ENCODE measurements at regions of chr7 and their contacts with region 1.

Region 1: DNA sequence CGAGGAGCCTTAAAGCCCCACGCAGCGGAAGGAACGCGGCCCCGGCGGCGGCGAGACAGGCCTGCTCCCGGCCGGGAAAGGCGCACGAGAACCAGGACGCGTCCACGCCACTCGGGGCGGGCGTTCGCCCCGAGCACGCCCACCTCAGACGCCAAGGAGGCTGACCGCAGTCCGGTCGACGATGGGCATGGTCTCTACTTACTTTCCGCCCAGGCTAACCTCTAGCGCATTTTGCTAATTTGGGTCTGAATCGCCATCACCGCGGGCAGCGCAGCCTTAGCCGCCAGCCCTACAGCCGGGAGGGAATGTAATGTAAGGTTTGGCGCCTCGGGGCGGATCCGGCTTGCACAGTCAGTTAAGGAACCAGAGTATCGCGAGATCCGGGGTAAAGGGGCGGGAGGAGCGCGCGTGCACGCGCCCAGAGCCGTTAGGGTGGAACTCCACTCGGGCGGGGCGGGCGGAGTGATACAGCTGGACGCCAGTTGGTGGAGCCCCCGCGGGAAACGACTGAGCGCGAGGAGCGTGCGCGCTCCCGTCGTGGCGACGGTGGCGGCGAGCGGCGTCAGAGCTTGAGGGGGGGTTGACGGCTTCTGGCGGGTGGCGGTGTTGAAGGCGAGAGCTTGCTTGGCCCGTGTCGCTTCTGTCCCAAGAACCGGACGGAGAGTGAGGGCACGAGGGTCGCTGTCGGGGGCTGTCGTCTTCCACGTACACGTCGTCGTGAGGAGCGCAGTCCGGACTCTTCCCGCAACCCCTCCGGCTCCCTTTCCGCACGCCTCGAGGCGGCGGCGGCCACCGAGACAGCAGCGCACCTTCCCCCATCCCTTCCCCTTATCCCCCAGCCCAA is at the start of gene LUC7L2:
- DNase-seq: peak; percentile 98
- H3K4me3 Mint-ChIP-seq: peak within 1 kb of the TSS; percentile 99
- H3K27ac Mint-ChIP-seq: peak within 1 kb of the TSS; percentile 96
- H3K4me1 Mint-ChIP-seq: peaks cover 29% of the 10 kb centered on the region
- H3K27me3 Mint-ChIP-seq: no peaks in the 10 kb centered on the region
- CTCF ChIP-seq: no peak
- total RNA-seq, gene LUC7L2: 138 and 145 TPM in 2 replicates

Region 2: DNA sequence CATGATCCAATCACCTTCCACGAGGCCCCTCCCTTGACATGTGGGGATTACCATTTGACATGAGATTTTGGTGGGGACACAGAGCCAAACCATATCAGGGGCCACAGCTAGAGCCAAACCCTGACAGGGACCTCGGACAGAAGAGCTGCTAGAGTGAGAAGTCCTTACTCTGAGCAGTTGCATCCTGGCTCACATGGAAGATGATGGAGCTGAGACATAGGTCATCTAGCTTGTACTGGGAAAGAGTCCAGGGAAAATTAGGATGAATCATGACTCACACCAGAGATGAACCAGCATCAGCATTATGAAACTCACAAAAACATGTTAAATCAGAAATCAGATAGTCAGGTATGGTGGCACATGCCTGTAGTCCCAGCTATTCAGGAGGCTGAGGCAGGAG is 31.2 kb before region 1 on chr7:
- CTCF ChIA-PET with region 1: interaction called, 3 read pairs
- POLR2A ChIA-PET with region 1: interaction called, 10 read pairs
- intact Hi-C with region 1: no loop called
- DNase-seq: peak; percentile 87
- H3K4me3 Mint-ChIP-seq: no peak overlapping the region
- H3K27ac Mint-ChIP-seq: no peak overlapping the region
- H3K4me1 Mint-ChIP-seq: no peaks in the 10 kb centered on the region
- H3K27me3 Mint-ChIP-seq: no peaks in the 10 kb centered on the region
- CTCF ChIP-seq: no peak

Region 3: GRCh38 chr7:139370301-139370942 is 10.8 kb after region 1 on chr7:
- CTCF ChIA-PET with region 1: interaction called, 3 read pairs
- POLR2A ChIA-PET with region 1: interaction called, 27 read pairs
- intact Hi-C with region 1: no loop called
- DNase-seq: no peak
- H3K4me3 Mint-ChIP-seq: no peak overlapping the region
- H3K27ac Mint-ChIP-seq: peak overlapping the region; percentile 32
- H3K4me1 Mint-ChIP-seq: peaks cover 37% of the 10 kb centered on the region
- H3K27me3 Mint-ChIP-seq: no peaks in the 10 kb centered on the region
- CTCF ChIP-seq: no peak

Region 4: DNA sequence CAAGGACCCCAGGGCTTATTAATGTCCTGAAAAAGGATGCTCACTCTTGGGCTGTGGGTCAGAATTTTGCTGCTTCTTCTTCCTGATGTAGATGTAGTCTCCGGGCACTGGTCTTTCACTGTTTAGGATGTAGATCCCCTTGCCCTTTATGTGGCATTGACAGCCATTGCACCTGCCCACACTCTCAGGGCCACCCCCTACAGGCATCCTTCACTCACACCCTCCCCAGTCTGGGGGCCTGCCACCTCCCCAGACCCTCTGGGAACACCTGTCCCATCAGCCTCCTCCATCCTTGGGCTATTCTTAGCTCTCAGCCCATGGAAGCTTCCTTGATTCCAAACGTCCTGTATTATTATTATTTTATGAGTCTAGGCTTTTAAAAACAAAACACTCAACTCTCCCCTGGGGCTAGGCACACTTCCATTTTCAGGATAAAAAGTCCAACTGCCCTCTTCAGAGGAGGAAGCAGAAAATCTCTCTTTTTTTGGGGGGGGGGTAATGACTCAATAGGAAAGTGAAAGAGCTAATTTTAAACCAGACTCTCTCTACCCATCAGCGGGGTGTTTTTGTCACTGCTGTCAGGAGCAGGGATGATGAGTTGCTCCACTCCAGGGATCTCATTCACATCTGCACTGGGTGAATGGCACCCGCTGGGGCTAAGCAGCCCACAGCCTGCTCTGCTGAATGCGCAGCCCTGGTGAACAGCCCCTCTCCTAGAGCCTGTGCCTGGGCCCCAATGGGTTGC is 135.4 kb after region 1 on chr7:
- CTCF ChIA-PET with region 1: no interaction called
- POLR2A ChIA-PET with region 1: interaction called, 11 read pairs
- intact Hi-C with region 1: no loop called
- DNase-seq: no peak
- H3K4me3 Mint-ChIP-seq: no peak overlapping the region
- H3K27ac Mint-ChIP-seq: peak overlapping the region; percentile 0
- H3K4me1 Mint-ChIP-seq: peaks cover 18% of the 10 kb centered on the region
- H3K27me3 Mint-ChIP-seq: no peaks in the 10 kb centered on the region
- CTCF ChIP-seq: no peak